T-cell (primary cell): ENCODE measurements at regions of chr14 and their contacts with region 1.

Region 1: GRCh38 chr14:49862089-49862673 is 9.6 kb upstream of the NEMF start:
- DNase-seq: peak; percentile 70 to 93 (median 82)
- ATAC-seq: peak; percentile 28 to 47 (median 33)
- H3K4me3 ChIP-seq: peak overlapping the region; percentile 73 to 93
- H3K4me3 Mint-ChIP-seq: no peak overlapping the region
- H3K27ac ChIP-seq: peak overlapping the region; percentile 97
- H3K27ac Mint-ChIP-seq: no peak overlapping the region
- H3K4me1 ChIP-seq: peaks cover 19 to 37% of the 10 kb centered on the region in 2 experiments
- H3K4me1 Mint-ChIP-seq: peaks cover 0 to 25% (median 14%) of the 10 kb centered on the region in 3 donors
- H3K27me3 ChIP-seq: no peaks in the 10 kb centered on the region
- H3K27me3 Mint-ChIP-seq: peaks cover 0 to 7% of the 10 kb centered on the region in 2 donors

Region 2: DNA sequence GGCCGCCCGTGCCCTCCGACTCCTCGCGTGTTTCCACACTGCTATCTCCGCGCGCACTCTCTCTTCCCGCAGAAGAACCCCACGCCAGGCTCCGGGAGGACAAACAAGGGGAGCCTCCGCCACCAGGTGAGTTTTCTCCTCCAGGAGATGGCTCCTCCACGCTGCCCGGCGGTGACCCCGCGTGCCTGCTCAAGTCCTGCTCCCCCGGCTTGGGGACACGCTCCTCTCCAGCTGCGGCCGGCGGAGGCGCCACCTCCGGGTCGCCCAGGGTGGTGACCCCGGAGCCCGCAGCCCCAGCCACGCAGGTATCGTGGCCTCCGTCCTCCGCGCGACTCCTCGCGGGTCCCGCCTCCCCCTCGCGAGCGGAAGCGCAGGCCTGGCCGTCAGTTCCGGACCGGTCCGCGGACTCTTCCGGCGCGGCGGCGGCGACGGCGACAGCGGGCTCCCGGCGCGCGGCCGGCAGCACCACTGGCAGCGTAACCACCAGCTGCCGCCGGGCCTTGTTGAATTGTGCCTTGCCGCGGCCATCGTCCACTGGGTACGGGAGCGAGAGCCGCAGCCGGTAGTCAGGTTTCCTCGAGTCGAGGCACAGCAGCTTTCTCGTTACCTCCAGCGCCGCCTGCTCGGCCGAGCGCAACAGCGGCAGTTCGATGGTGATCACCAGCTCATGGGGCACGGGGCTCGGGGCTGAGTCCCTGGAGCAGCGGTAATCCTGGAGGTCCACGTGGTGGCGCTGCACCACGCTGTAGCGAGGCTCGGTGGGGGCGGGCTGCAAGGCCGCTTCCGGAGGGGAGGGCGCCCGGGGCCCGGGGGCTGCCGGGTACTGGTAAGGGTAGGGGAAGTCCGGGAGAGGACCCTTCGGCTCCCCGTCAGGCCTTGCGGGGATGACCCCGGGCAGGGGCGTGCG is 228.3 kb before region 1 on chr14:
- CTCF ChIA-PET with region 1: interaction called in 1 of 2 experiments, 11 read pairs
- POLR2A ChIA-PET with region 1: interaction called, 3 to 5 read pairs
- DNase-seq: peak; percentile 83 to 96 (median 91)
- ATAC-seq: peak; percentile 84 to 88 (median 85)
- H3K4me3 ChIP-seq: peak overlapping the region; percentile 92 to 96
- H3K4me3 Mint-ChIP-seq: peak overlapping the region; percentile 95 to 99 (median 97)
- H3K27ac ChIP-seq: peak overlapping the region; percentile 98
- H3K27ac Mint-ChIP-seq: peak overlapping the region; percentile 92 to 94
- H3K4me1 ChIP-seq: peaks cover 4 to 41% of the 10 kb centered on the region in 2 experiments
- H3K4me1 Mint-ChIP-seq: peaks cover 48 to 68% (median 63%) of the 10 kb centered on the region in 3 donors
- H3K27me3 ChIP-seq: no peaks in the 10 kb centered on the region
- H3K27me3 Mint-ChIP-seq: no peaks in the 10 kb centered on the region

Region 3: DNA sequence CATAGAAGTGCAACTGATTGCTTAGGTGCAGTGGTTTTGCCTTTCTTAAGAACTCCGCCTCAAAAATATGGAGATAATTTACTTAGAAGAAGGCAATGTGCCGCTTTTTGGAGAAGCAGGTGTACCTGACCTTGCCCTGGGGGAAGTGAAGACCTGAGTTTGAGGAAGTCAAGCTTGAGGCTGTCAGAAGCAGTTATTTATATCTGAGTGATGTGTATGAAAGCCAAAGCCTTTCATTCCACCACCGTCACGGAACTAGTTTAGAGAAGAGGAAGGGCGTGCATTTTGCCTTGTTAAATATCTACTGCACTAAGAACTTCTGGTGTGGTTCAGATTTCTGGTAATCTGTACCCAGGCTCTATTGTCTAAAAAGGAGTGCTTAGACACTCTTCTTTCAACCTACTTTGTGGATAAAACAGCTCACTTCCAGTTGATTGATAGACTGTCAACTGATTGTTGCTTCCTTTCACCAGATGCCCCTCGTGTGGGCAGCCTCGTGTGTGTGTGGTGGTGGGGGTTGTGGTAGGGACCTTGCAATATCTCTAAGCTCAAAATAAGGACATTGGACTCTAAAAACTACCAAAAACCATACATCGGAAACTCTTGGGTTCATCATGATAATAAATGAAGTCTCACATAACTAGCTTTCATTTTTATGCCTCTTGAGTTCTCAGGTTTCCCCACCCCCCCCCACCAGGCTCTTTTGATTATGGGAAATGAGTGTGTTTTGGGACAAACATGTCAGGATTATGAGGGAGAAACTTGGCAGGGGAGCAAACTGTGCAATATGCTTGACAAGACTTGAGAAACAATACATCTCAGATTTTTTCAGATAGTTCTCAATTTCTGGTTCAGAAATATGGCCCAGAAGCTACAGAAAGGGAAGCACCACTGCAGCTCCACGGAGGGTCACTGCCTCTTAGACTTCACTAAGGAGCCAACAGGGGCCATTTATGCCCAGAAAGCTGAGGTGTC is 109.3 kb after region 1 on chr14:
- CTCF ChIA-PET with region 1: interaction called, 8 to 11 read pairs
- POLR2A ChIA-PET with region 1: interaction called in 1 of 2 experiments, 9 read pairs
- DNase-seq: peak in 32 of 35 experiments; percentile 26 to 81 (median 60)
- ATAC-seq: peak; percentile 86 to 91 (median 89)
- H3K4me3 ChIP-seq: peak overlapping the region in 1 of 2 donors; percentile 28
- H3K4me3 Mint-ChIP-seq: peak overlapping the region; percentile 58 to 88 (median 75)
- H3K27ac ChIP-seq: peak overlapping the region; percentile 95
- H3K27ac Mint-ChIP-seq: peak overlapping the region; percentile 92 to 99
- H3K4me1 ChIP-seq: peaks cover 40 to 67% of the 10 kb centered on the region in 2 experiments
- H3K4me1 Mint-ChIP-seq: peaks cover 58 to 70% (median 62%) of the 10 kb centered on the region in 3 donors
- H3K27me3 ChIP-seq: no peaks in the 10 kb centered on the region
- H3K27me3 Mint-ChIP-seq: no peaks in the 10 kb centered on the region

Region 4: DNA sequence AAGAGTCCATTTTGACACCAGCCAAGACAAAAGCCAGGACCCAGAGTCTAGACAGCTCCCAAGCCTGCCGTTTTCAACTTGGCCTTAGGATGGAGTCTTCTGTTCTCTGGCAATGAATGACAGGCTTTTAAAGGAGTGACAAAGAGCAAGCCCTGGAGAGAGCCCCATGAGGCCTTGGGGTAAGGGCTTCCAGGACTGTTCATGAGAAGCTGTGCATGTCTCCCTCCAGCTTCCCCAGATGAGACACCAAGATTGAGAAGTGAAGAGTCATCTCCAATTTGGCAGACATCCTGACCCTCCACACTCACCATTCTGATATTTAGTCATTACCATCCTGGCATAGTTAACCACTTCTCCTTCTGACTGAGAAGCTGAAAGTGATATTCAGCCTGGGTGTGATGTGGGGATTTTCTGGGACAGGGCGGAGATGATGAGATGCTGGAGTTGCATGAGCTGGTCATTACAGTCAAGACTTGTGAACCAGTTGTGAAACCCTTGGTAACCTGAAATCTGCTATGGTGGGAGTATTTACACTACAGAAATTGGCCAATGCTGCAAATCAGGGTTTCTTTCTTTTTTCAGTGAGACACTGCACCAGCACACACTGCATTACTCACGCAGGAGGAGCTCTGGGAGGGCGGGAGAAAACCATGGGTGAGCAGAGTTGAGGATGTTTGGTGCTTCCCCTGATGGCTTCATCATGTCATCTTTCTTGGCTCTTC is 176.4 kb after region 1 on chr14:
- CTCF ChIA-PET with region 1: interaction called in 1 of 2 experiments, 10 read pairs
- POLR2A ChIA-PET with region 1: no interaction called
- DNase-seq: peak in 6 of 35 experiments; percentile 8 to 40 (median 20)
- ATAC-seq: peak in 2 of 4 experiments; percentile 23 to 37
- H3K4me3 ChIP-seq: no peak overlapping the region
- H3K4me3 Mint-ChIP-seq: peak overlapping the region in 2 of 3 donors; percentile 31 to 40
- H3K27ac ChIP-seq: peak overlapping the region; percentile 78
- H3K27ac Mint-ChIP-seq: peak overlapping the region; percentile 90 to 99
- H3K4me1 ChIP-seq: peaks cover 27 to 56% of the 10 kb centered on the region in 2 experiments
- H3K4me1 Mint-ChIP-seq: peaks cover 36 to 62% (median 55%) of the 10 kb centered on the region in 3 donors
- H3K27me3 ChIP-seq: no peaks in the 10 kb centered on the region
- H3K27me3 Mint-ChIP-seq: no peaks in the 10 kb centered on the region

Region 5: GRCh38 chr14:50085570-50086320 is 223.6 kb after region 1 on chr14:
- CTCF ChIA-PET with region 1: interaction called, 4 to 45 read pairs
- POLR2A ChIA-PET with region 1: interaction called, 4 to 5 read pairs
- DNase-seq: peak in 4 of 35 experiments; percentile 13 to 63 (median 26)
- ATAC-seq: no peak
- H3K4me3 ChIP-seq: no peak overlapping the region
- H3K4me3 Mint-ChIP-seq: peak overlapping the region; percentile 39 to 70 (median 59)
- H3K27ac ChIP-seq: peak overlapping the region; percentile 99
- H3K27ac Mint-ChIP-seq: peak overlapping the region; percentile 95 to 96
- H3K4me1 ChIP-seq: peaks cover 83 to 90% of the 10 kb centered on the region in 2 experiments
- H3K4me1 Mint-ChIP-seq: peaks cover 91 to 93% (median 92%) of the 10 kb centered on the region in 3 donors
- H3K27me3 ChIP-seq: no peaks in the 10 kb centered on the region
- H3K27me3 Mint-ChIP-seq: no peaks in the 10 kb centered on the region

Region 6: DNA sequence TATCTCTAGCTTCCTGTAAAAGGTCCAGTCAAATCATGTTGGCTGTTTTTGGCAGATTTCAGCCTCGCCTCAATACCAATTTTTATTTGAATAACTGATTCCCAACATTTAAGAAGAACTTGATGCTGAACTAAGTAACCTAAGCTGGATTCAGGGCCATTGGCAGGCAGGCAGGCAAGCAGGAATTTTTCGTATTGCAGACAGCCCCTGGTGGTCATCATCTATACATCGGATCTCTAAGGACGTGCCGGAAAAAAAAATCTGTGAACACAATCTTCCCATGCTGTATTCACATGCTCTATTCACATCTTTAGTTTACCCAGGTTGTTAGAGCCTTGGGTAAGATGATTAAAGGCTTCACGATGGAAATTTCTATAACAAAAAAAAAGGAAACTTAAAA is 247.2 kb after region 1 on chr14:
- CTCF ChIA-PET with region 1: interaction called, 9 to 13 read pairs
- POLR2A ChIA-PET with region 1: interaction called in 1 of 2 experiments, 15 read pairs
- DNase-seq: no peak
- ATAC-seq: no peak
- H3K4me3 ChIP-seq: no peak overlapping the region
- H3K4me3 Mint-ChIP-seq: no peak overlapping the region
- H3K27ac ChIP-seq: no peak overlapping the region
- H3K27ac Mint-ChIP-seq: peak overlapping the region in 1 of 2 donors; percentile 68
- H3K4me1 ChIP-seq: peaks cover 0 to 3% of the 10 kb centered on the region in 2 experiments
- H3K4me1 Mint-ChIP-seq: peaks cover 10 to 27% (median 25%) of the 10 kb centered on the region in 3 donors
- H3K27me3 ChIP-seq: no peaks in the 10 kb centered on the region
- H3K27me3 Mint-ChIP-seq: no peaks in the 10 kb centered on the region

Region 7: GRCh38 chr14:50311975-50312733 is 450.0 kb after region 1 on chr14 and contains the starts of genes DMAC2L and L2HGDH:
- CTCF ChIA-PET with region 1: interaction called in 1 of 2 experiments, 13 read pairs
- POLR2A ChIA-PET with region 1: no interaction called
- DNase-seq: peak; percentile 69 to 93 (median 82)
- ATAC-seq: peak; percentile 89 to 94 (median 93)
- H3K4me3 ChIP-seq: peak within 1 kb of the TSS; percentile 77 to 85
- H3K4me3 Mint-ChIP-seq: peak within 1 kb of the TSS; percentile 88 to 94 (median 94)
- H3K27ac ChIP-seq: peak within 1 kb of the TSS; percentile 86
- H3K27ac Mint-ChIP-seq: peak within 1 kb of the TSS; percentile 96 to 98
- H3K4me1 ChIP-seq: peaks cover 15 to 21% of the 10 kb centered on the region in 2 experiments
- H3K4me1 Mint-ChIP-seq: peaks cover 41 to 53% (median 42%) of the 10 kb centered on the region in 3 donors
- H3K27me3 ChIP-seq: no peaks in the 10 kb centered on the region
- H3K27me3 Mint-ChIP-seq: no peaks in the 10 kb centered on the region
- total RNA-seq, gene DMAC2L: 14.9 to 20.5 (median 19.0) TPM
- total RNA-seq, gene L2HGDH: 3.9 to 6.3 (median 4.4) TPM